ENCODE measurements at regions of chr19 and their contacts with region 1.

Region 1: DNA sequence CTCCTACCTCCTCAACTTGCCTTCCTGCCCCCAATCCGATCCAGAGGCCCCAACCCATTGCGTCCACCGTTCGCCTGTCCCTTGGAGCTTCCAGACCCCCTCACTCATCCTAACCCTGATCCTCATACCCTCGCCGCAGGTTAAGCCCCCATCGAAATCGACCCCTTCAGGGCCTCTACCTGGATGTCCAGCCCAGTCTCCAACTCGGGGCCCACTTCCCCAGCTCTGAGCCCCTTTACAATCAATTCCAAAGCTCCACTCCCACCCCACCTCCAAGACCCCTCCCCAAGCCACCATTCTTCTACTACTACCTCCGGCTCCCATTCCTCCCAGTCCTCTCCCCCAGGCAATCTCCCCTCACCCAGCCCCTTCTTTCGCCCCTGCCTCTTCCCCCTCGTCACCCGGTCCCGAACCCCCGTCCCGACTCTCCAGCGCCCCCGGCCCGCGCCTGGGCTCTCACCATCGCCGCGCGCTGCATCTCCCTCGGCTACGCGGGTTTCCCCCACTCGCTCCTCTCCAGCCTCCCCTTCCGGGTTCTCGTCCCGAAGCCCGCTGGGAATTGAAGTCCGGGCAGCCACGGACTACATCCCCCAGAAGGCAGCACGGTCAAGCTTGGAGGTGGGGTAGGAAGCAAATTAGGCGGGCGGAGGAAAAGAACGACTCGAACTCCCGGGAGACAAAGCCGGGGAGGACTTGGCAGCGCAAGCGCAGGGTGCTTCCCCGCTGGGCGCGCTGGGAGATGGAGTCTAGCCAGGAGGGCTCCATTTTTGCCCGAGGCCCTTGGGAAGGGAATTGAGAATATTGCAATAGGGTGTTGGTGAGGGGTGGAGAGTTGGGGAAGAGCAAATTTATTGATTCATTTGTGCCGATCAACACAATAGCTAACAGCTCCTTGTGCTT is at the start of gene FBXO46:
- DNase-seq: peak; percentile 96
- ATAC-seq: peak; percentile 98
- H3K4me3 ChIP-seq: peak within 1 kb of the TSS; percentile 89 to 92
- H3K27ac ChIP-seq: peak within 1 kb of the TSS; percentile 75
- H3K4me1 ChIP-seq: peaks cover 6 to 43% of the 10 kb centered on the region in 2 experiments
- H3K27me3 ChIP-seq: no peaks in the 10 kb centered on the region
- CTCF ChIP-seq: 0 out of 6 replicates have a peak, but pooled peaks of 1 of the 3 experiments have one; percentile 7
- POLR2A ChIP-seq: no peak
- RAD21 ChIP-seq: no peak
- total RNA-seq, gene FBXO46: 31.7 TPM

Region 2: GRCh38 chr19:45717166-45717982 is 13.3 kb before region 1 on chr19:
- CTCF ChIA-PET with region 1: no interaction called
- POLR2A ChIA-PET with region 1: interaction called, 5 read pairs
- RAD21 ChIA-PET with region 1: no interaction called
- intact Hi-C with region 1: loop called (anchors 1 kb)
- DNase-seq: peak; percentile 96
- ATAC-seq: peak; percentile 92
- H3K4me3 ChIP-seq: peak overlapping the region; percentile 52 to 64
- H3K27ac ChIP-seq: peak overlapping the region; percentile 58
- H3K4me1 ChIP-seq: peaks cover 40 to 52% of the 10 kb centered on the region in 2 experiments
- H3K27me3 ChIP-seq: no peaks in the 10 kb centered on the region
- CTCF ChIP-seq: 0 out of 6 replicates have a peak, but pooled peaks of 1 of the 3 experiments have one; percentile 8
- POLR2A ChIP-seq: no peak
- RAD21 ChIP-seq: no peak